Panc1 (cell line): ENCODE measurements at regions of chr3 and their contacts with region 1.

Region 1: DNA sequence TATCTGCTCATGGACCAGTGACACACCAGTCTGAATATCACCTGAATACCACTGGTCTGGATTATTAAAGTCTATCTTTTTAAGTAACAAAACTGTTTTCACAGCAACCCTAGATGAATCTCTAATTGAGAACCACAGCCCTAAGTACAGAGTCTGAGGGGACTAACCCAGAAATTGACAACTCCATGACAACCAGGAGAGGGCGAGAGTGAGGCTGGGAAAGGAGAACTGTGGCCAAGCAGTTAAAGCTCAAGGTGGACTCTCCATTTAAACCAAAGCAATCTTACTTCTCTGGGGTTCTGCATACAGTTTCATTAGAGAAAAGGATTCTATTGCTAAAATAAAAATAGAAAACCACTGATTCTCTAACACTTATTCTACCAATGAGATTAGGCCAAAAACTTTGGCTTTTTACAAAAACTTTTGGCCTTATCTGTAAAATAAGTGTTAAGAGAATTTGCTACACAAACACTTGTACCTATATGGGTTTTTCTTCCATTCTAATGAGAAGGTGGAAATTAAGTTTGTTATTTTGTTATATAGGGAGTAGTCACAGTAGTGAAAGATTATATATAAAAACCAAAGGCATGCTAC is 11.4 kb downstream of the NEK10 start:
- DNase-seq: peak; percentile 46
- ATAC-seq: peak; percentile 67
- H3K4me3 ChIP-seq: no peak overlapping the region
- H3K27ac ChIP-seq: no peak overlapping the region
- H3K4me1 ChIP-seq: peaks cover 17% of the 10 kb centered on the region
- H3K27me3 ChIP-seq: no peaks in the 10 kb centered on the region
- CTCF ChIP-seq: peak; percentile 73

Region 2: DNA sequence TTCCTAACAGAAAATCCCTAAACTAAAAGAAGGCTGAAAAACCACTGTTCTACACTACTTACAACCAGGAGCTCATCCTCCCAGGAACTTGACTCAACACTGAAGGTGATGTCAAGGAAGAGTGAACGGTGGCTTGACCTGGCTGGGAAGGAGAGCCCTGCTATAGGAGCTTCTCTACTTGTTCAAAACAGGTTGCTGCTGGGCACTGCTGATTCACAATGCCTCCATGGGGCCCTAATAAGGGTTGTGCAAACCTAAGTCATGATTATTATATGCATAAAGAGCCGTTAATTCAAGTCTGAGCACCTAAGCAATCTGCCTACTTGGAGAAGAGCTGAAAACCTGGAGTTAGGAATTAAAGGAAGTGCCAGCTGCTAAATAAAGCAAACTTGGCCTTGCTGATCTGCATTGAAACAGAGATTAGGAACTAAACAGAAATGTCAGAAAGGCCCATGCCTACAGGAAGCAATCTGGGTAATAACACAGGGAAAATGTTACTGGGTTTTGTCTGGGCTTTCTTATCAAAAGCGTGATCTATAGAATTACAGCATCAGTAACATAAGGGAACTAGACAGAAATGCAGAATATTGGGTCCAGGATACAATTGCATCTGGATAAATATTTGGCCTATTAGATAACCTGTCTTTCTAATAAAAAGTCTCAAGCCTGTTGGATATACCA is 231.8 kb before region 1 on chr3:
- CTCF ChIA-PET with region 1: no interaction called
- POLR2A ChIA-PET with region 1: no interaction called
- in situ Hi-C with region 1: no loop called
- intact Hi-C with region 1: no loop called
- DNase-seq: no peak
- ATAC-seq: no peak
- H3K4me3 ChIP-seq: no peak overlapping the region
- H3K27ac ChIP-seq: no peak overlapping the region
- H3K4me1 ChIP-seq: no peaks in the 10 kb centered on the region
- H3K27me3 ChIP-seq: no peaks in the 10 kb centered on the region
- CTCF ChIP-seq: no peak

Region 3: DNA sequence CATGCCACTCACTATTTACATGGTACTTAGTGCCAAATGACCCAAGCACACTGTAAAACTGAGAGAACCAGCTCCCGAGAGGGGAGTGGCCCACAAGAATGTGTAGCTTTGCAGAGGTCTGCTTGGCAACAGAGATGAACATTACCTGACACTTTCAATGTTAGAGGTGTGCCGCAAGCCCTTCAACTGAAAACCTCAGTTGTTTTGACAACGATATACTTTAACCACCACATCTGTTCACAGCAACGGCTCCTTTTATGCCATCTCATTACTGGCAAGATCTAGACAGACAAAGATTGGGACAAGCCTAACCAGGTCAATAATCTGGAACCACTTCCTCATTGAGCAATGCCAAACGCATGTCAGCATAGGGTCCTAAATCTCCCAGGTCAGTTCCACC is 12.3 kb before region 1 on chr3:
- CTCF ChIA-PET with region 1: no interaction called
- POLR2A ChIA-PET with region 1: interaction called, 14 read pairs
- in situ Hi-C with region 1: no loop called
- intact Hi-C with region 1: no loop called
- DNase-seq: no peak
- ATAC-seq: no peak
- H3K4me3 ChIP-seq: no peak overlapping the region
- H3K27ac ChIP-seq: no peak overlapping the region
- H3K4me1 ChIP-seq: no peaks in the 10 kb centered on the region
- H3K27me3 ChIP-seq: no peaks in the 10 kb centered on the region
- CTCF ChIP-seq: no peak

Region 4: DNA sequence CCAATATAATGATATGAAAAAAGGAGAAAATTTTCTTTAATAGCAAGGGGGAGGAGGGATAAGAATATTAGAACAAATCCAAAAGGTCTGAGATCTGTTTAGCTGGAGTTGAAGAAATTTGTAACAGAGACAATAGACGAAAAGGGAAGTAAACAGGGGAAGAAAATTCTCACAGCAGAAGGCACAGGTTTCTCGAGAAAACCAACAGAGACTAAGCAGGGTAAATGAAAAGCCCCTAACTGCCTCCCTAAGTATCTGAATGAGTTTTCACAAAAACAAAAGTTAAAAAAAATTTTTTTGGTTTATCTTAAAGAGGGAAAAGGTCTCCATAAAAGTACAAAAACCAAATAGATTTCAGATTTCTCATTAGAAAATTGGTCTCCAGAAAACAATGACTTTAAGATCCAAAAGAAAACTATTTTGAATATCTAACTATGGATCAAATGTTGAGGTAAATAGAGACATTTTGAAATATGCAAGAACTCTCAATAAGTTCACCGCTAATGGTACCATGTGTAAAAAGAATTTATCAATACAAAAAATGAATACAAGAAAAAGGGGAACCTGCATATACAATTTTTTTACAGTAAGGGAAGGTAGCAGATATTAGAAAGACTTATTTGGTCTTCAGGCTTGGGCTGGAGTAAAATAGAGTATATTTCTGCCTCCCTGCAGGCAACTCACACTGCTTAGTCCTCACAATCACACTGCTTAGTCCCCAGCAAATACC is 35.4 kb after region 1 on chr3:
- CTCF ChIA-PET with region 1: no interaction called
- POLR2A ChIA-PET with region 1: no interaction called
- in situ Hi-C with region 1: no loop called
- intact Hi-C with region 1: no loop called
- DNase-seq: no peak
- ATAC-seq: no peak
- H3K4me3 ChIP-seq: no peak overlapping the region
- H3K27ac ChIP-seq: no peak overlapping the region
- H3K4me1 ChIP-seq: peaks cover 7% of the 10 kb centered on the region; the same call in 1 of the 2 replicates
- H3K27me3 ChIP-seq: no peaks in the 10 kb centered on the region
- CTCF ChIP-seq: no peak